ENCODE measurements at regions of chr12 and their contacts with region 1.

Region 1: GRCh38 chr12:6873094-6874014 is at the start of gene SPSB2:
- DNase-seq: peak; percentile 96 to 100 (median 99)
- ATAC-seq: peak; percentile 90
- H3K4me3 ChIP-seq: peak within 1 kb of the TSS; percentile 89 to 99
- H3K4me3 Mint-ChIP-seq: peak within 1 kb of the TSS; percentile 90
- H3K27ac ChIP-seq: peak within 1 kb of the TSS; percentile 77 to 83
- H3K27ac Mint-ChIP-seq: peak within 1 kb of the TSS; percentile 90
- H3K4me1 ChIP-seq: peaks cover 44% of the 10 kb centered on the region
- H3K4me1 Mint-ChIP-seq: peaks cover 47% of the 10 kb centered on the region
- H3K27me3 ChIP-seq: no peaks in the 10 kb centered on the region
- H3K27me3 Mint-ChIP-seq: no peaks in the 10 kb centered on the region
- CTCF ChIP-seq: no peak
- total RNA-seq, gene SPSB2: 2.6 to 3.0 TPM

Region 2: DNA sequence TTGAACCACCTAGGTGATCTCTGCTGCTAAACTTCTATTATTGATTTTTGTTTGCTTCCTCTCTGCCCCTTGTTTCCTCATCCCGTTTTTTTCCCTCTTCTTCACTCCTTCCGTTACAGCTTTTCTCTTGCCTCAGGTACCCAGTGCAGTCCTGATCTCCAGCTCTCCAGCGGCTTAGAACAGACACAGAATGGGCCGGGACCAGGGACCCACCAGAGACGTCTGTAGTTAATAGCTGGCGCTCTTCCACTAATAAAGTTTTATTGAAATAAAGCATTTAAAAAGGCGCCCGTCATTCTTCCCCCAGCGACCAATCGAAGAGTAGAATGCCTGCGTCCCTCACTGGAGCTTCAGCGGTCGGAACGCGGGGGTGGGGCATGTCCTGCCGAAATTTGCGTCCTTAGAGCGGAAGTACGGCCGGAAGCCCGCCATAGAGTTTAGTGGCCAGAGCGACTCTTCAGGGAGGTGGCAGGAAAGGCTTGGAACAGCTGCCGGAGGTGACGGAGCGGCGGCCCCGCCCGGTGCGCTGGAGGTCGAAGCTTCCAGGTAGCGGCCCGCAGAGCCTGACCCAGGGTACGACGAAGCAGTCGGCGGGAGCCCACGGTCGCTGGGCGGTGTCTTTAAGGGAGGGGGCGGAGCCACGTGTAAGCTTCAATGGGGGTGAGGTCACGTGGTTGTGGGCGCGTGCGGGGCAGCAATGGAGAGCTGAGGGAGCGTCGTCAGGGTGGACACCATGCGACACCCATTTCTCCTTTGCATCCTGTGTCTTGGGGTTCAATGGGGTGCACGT is 149.6 kb before region 1 on chr12 and contains the start of gene COPS7A:
- CTCF ChIA-PET with region 1: interaction called, 4 read pairs
- POLR2A ChIA-PET with region 1: interaction called, 6 read pairs
- intact Hi-C with region 1: loop called in 1 of 2 experiments (anchors 1 kb)
- DNase-seq: peak; percentile 83 to 98 (median 97)
- ATAC-seq: peak; percentile 85
- H3K4me3 ChIP-seq: peak within 1 kb of the TSS; percentile 59 to 68
- H3K4me3 Mint-ChIP-seq: peak within 1 kb of the TSS; percentile 83
- H3K27ac ChIP-seq: peak within 1 kb of the TSS; percentile 67 to 92
- H3K27ac Mint-ChIP-seq: peak within 1 kb of the TSS; percentile 94
- H3K4me1 ChIP-seq: peaks cover 19% of the 10 kb centered on the region
- H3K4me1 Mint-ChIP-seq: peaks cover 27% of the 10 kb centered on the region
- H3K27me3 ChIP-seq: no peaks in the 10 kb centered on the region
- H3K27me3 Mint-ChIP-seq: no peaks in the 10 kb centered on the region
- CTCF ChIP-seq: peak; percentile 28
- total RNA-seq, gene COPS7A: 11.0 to 11.1 TPM

Region 3: GRCh38 chr12:6890789-6891645 is 17.7 kb after region 1 on chr12:
- CTCF ChIA-PET with region 1: interaction called, 81 read pairs
- POLR2A ChIA-PET with region 1: interaction called, 46 read pairs
- intact Hi-C with region 1: loop called (anchors 1 kb)
- DNase-seq: peak; percentile 97 to 100 (median 99)
- ATAC-seq: peak; percentile 94
- H3K4me3 ChIP-seq: peak overlapping the region; percentile 64 to 70
- H3K4me3 Mint-ChIP-seq: peak overlapping the region; percentile 80
- H3K27ac ChIP-seq: peak overlapping the region; percentile 64 to 97
- H3K27ac Mint-ChIP-seq: peak overlapping the region; percentile 90
- H3K4me1 ChIP-seq: peaks cover 11% of the 10 kb centered on the region
- H3K4me1 Mint-ChIP-seq: peaks cover 16% of the 10 kb centered on the region
- H3K27me3 ChIP-seq: no peaks in the 10 kb centered on the region
- H3K27me3 Mint-ChIP-seq: no peaks in the 10 kb centered on the region
- CTCF ChIP-seq: peak; percentile 86

Region 4: DNA sequence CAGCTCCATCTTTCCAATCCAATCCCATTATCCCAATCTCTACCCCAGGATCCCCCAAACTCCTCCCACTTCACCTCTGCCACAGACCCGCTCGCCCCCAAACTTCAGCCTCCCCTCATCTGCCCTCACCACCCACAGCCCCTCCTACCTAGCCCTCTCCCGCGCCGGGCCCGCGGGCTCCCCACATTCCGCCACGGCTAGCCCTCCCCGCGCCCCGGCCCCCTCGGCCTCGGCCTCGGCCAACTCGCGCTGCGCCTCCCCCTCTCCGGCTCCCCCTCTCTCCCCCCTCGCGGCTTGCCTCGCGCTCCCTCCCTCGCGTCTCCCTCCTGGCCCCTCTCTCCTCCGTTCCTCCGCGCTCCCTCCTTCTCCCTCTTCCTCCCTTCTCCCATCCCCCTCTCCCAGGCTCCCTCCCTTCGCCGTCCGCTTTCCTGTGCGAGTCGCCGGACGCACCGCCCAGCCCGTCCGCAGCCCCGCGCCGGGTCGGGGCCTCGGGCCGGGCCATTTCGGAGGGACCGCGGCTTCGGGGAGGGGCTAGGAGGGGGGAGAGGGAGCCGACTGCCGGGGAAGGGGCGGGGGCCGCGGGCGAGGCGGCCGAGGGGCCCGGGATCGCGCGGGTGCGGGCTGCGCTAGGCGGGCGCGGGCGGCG is 54.1 kb after region 1 on chr12 and contains the start of gene ATN1:
- CTCF ChIA-PET with region 1: interaction called, 42 read pairs
- POLR2A ChIA-PET with region 1: interaction called, 4 read pairs
- intact Hi-C with region 1: loop called in 1 of 2 experiments (anchors 1 kb)
- DNase-seq: peak in 6 of 9 experiments; percentile 36 to 69 (median 58)
- ATAC-seq: peak; percentile 44
- H3K4me3 ChIP-seq: peak within 1 kb of the TSS; percentile 52 to 64
- H3K4me3 Mint-ChIP-seq: peak within 1 kb of the TSS; percentile 85
- H3K27ac ChIP-seq: peak within 1 kb of the TSS; percentile 51 to 71
- H3K27ac Mint-ChIP-seq: peak within 1 kb of the TSS; percentile 91
- H3K4me1 ChIP-seq: peaks cover 31% of the 10 kb centered on the region
- H3K4me1 Mint-ChIP-seq: peaks cover 44% of the 10 kb centered on the region
- H3K27me3 ChIP-seq: no peaks in the 10 kb centered on the region
- H3K27me3 Mint-ChIP-seq: no peaks in the 10 kb centered on the region
- CTCF ChIP-seq: no peak
- total RNA-seq, gene ATN1: 26.5 to 33.4 TPM

Region 5: DNA sequence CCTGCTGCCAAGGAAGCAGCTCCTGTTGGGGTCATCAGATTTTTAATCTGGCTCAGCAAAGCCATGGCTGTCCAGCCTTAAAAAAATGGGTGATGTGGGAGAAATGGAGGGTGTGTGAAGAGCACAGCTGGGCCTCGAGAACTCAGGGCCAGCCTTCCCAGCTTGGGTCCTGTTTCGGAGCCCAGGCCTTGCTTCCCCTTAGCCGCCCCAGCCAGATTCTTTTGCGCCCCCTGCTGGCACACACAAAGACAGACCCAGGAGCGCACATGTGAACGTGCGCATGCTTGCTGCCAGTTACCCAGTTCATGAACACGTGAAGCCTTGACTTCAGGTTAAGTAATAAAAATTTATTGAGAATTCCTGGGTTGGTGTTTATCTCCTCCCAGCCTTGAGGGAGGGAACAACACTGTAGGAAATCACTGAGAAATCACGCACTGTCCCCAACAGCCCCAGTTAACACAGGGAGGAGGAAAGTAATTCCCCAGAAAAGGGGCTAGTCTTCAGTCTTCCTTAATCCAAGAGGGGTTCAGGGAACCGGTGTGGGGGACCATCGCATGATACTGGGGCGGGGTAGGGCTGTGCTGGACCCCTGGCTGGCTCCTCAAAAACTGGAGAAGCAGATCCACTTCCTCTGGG is 91.8 kb after region 1 on chr12:
- CTCF ChIA-PET with region 1: interaction called, 18 read pairs
- POLR2A ChIA-PET with region 1: interaction called, 7 read pairs
- intact Hi-C with region 1: loop called (anchors 1 kb)
- DNase-seq: peak; percentile 74 to 93 (median 88)
- ATAC-seq: peak; percentile 45
- H3K4me3 ChIP-seq: no peak overlapping the region
- H3K4me3 Mint-ChIP-seq: no peak overlapping the region
- H3K27ac ChIP-seq: peak overlapping the region; percentile 20 to 74
- H3K27ac Mint-ChIP-seq: peak overlapping the region; percentile 83
- H3K4me1 ChIP-seq: peaks cover 56% of the 10 kb centered on the region
- H3K4me1 Mint-ChIP-seq: peaks cover 54% of the 10 kb centered on the region
- H3K27me3 ChIP-seq: no peaks in the 10 kb centered on the region
- H3K27me3 Mint-ChIP-seq: no peaks in the 10 kb centered on the region
- CTCF ChIP-seq: peak; percentile 78

Region 6: GRCh38 chr12:7188562-7189397 is 315.4 kb after region 1 on chr12:
- CTCF ChIA-PET with region 1: no interaction called
- POLR2A ChIA-PET with region 1: no interaction called
- intact Hi-C with region 1: loop called in 1 of 2 experiments (anchors 1 kb)
- DNase-seq: peak; percentile 36 to 76 (median 63)
- ATAC-seq: peak; percentile 32
- H3K4me3 ChIP-seq: peak overlapping the region; percentile 85 to 86
- H3K4me3 Mint-ChIP-seq: peak overlapping the region; percentile 95
- H3K27ac ChIP-seq: peak overlapping the region; percentile 66 to 90
- H3K27ac Mint-ChIP-seq: peak overlapping the region; percentile 97
- H3K4me1 ChIP-seq: peaks cover 26% of the 10 kb centered on the region
- H3K4me1 Mint-ChIP-seq: peaks cover 44% of the 10 kb centered on the region
- H3K27me3 ChIP-seq: no peaks in the 10 kb centered on the region
- H3K27me3 Mint-ChIP-seq: no peaks in the 10 kb centered on the region
- CTCF ChIP-seq: peak; percentile 63